ENCODE measurements at regions of chr3 and their contacts with region 1.

Region 1: GRCh38 chr3:58008140-58009025 is at the start of gene FLNB:
- DNase-seq: peak; percentile 48
- ATAC-seq: peak; percentile 80
- H3K4me3 ChIP-seq: peak within 1 kb of the TSS; percentile 80 to 85
- H3K27ac ChIP-seq: peak within 1 kb of the TSS; percentile 87
- H3K4me1 ChIP-seq: peaks cover 28 to 46% of the 10 kb centered on the region in 2 experiments
- H3K27me3 ChIP-seq: no peaks in the 10 kb centered on the region
- CTCF ChIP-seq: peak; percentile 55 to 73 (median 71); a peak in 5 of 6 replicates
- POLR2A ChIP-seq: peak; percentile 93
- RAD21 ChIP-seq: peak; percentile 85
- total RNA-seq, gene FLNB: 116 TPM

Region 2: GRCh38 chr3:58116161-58116955 is 108.0 kb after region 1 on chr3:
- CTCF ChIA-PET with region 1: no interaction called
- POLR2A ChIA-PET with region 1: no interaction called
- RAD21 ChIA-PET with region 1: no interaction called
- intact Hi-C with region 1: loop called (anchors 10 kb)
- DNase-seq: no peak
- ATAC-seq: no peak
- H3K4me3 ChIP-seq: no peak overlapping the region
- H3K27ac ChIP-seq: no peak overlapping the region
- H3K4me1 ChIP-seq: peaks cover 2 to 7% of the 10 kb centered on the region in 2 experiments; a peak in 2 of 4 replicates
- H3K27me3 ChIP-seq: no peaks in the 10 kb centered on the region
- CTCF ChIP-seq: no peak
- POLR2A ChIP-seq: no peak
- RAD21 ChIP-seq: no peak

Region 3: GRCh38 chr3:58161435-58162398 is 153.3 kb after region 1 on chr3:
- CTCF ChIA-PET with region 1: no interaction called
- POLR2A ChIA-PET with region 1: no interaction called
- RAD21 ChIA-PET with region 1: interaction called in 1 of 2 experiments, 3 read pairs
- intact Hi-C with region 1: loop called (anchors 5 kb)
- DNase-seq: peak; percentile 88
- ATAC-seq: peak; percentile 81
- H3K4me3 ChIP-seq: no peak overlapping the region
- H3K27ac ChIP-seq: peak overlapping the region; percentile 71
- H3K4me1 ChIP-seq: peaks cover 52 to 72% of the 10 kb centered on the region in 2 experiments
- H3K27me3 ChIP-seq: no peaks in the 10 kb centered on the region
- CTCF ChIP-seq: no peak
- POLR2A ChIP-seq: no peak
- RAD21 ChIP-seq: no peak

Measured in HCT116 (cell line).